AG04449 (cell line): ENCODE measurements at regions of chr9 and their contacts with region 1.

Region 1: GRCh38 chr9:109440797-109441287 is 57.3 kb downstream of the PTPN3 start:
- DNase-seq: peak; percentile 42
- H3K4me3 ChIP-seq: no peak overlapping the region
- CTCF ChIP-seq: peak; percentile 73

Region 2: DNA sequence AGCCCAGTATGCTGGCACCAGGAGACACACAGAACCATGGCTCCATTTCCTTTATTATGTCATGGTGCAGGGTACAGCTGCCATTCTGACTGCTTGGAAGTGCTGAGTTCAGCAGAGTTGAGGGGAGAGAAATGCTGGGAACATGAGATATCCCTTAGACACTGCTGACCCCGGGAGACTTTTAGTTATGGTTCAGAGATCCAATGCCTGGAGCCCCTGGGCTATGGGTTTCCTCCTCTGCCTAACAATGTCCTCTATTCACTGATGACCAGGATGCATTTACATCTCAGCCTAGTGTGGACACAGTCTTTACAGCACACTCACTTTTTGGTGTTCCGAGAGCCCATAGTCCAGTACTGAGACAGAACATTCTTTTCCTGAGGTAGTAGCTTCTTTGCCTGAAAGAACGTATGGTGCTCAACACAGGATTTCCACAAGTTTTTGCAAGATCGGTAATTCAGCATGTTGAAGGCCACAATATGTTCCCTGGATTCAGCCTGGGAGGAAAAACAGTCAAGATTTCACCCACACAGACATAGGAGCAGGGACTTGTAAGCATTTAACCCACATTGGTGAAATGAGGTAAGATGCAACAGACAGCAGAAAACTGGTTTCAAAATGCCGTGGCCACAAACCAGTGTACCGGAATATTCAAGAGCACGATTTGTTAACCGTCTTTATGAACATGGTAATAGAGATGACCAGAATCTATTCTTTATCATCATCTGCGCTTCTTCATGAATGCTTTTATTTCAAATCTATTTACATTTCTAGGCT is 14.0 kb before region 1 on chr9:
- CTCF ChIA-PET with region 1: interaction called, 16 read pairs
- POLR2A ChIA-PET with region 1: no interaction called
- DNase-seq: no peak
- H3K4me3 ChIP-seq: no peak overlapping the region
- CTCF ChIP-seq: no peak

Region 3: GRCh38 chr9:109453210-109453842 is 12.5 kb after region 1 on chr9:
- CTCF ChIA-PET with region 1: interaction called, 35 read pairs
- POLR2A ChIA-PET with region 1: no interaction called
- DNase-seq: peak; percentile 12
- H3K4me3 ChIP-seq: no peak overlapping the region
- CTCF ChIP-seq: no peak

Region 4: GRCh38 chr9:109520478-109521132 is 79.8 kb after region 1 on chr9:
- CTCF ChIA-PET with region 1: interaction called, 29 read pairs
- POLR2A ChIA-PET with region 1: no interaction called
- DNase-seq: no peak
- H3K4me3 ChIP-seq: no peak overlapping the region
- CTCF ChIP-seq: peak; percentile 83